ENCODE measurements at regions of chr16 and their contacts with region 1.

Region 1: DNA sequence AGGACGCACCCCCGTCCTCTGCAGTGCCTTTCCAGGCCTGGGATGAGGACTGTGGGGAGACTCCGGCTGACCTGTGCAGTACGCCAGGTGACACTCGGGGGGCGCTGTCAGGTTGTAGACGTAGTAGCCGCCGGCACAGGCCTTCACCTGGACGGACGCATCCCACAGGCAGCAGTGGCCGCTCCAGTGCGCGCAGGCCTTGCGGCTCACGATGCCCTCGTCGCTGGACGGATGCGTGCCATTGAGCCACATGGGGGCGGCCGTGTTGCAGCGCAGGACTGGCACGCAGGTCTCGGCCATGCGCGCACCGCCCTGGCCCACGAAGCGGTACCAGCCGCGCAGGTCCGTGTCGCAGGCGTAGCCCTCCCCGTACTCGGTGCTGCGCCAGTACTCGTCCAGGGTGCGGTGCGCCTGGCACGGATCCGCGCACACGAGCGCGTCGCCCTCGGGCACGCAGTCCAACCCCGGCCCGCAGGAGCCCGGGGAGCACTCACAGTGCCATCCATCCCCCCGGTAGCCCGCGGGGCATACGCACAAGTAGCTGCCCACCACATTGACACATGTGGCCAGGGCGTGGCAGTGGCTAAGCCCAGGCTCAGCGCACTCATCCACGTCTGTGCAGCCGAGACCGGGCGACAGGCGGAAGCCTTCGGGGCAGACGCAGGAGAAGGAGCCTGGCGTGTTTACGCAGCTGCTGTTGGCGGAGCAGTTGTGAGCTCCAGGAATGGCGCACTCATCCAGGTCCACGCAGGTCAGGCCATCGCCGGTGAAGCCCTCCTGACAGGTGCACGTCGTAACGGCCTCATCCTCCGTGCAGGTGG is 3.9 kb downstream of the UMOD start:
- DNase-seq: no peak
- H3K4me3 ChIP-seq: no peak overlapping the region
- H3K27ac ChIP-seq: no peak overlapping the region
- H3K4me1 ChIP-seq: no peaks in the 10 kb centered on the region
- CTCF ChIP-seq: no peak

Region 2: DNA sequence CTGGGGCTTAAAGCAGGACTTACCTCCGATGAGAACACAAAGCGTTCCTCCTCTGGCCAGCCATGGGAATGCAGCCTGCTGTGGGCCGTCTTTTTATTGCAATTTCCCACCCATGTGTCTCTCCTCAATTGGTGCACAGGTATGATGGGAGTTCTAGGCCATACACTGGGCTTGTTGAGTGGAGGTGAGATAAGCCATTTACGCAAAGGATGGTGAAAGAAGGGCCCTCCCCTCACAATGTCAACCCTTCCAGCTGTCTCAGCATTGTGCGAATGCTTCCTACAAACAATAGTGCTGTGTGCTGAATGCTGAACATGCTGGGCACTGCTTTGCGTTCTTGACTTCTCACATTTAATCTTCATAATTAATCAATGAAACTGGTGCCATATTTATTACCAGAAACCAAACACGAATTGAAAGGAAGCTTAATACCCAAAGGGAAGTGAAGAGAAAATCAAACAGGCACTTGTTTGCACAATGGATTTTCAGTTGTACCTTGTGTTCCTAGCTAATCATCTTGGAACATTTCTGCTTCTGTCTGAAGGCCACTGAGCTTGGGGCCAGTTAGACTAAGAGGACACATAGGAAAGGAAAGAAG is 21.0 kb before region 1 on chr16 and contains the start of gene GP2:
- CTCF ChIA-PET with region 1: no interaction called
- POLR2A ChIA-PET with region 1: no interaction called
- intact Hi-C with region 1: no loop called
- DNase-seq: no peak
- H3K4me3 ChIP-seq: no peak within 1 kb of the TSS
- H3K27ac ChIP-seq: no peak within 1 kb of the TSS
- H3K4me1 ChIP-seq: no peaks in the 10 kb centered on the region
- CTCF ChIP-seq: no peak
- total RNA-seq, gene GP2: not detected in 2 replicates

Region 3: DNA sequence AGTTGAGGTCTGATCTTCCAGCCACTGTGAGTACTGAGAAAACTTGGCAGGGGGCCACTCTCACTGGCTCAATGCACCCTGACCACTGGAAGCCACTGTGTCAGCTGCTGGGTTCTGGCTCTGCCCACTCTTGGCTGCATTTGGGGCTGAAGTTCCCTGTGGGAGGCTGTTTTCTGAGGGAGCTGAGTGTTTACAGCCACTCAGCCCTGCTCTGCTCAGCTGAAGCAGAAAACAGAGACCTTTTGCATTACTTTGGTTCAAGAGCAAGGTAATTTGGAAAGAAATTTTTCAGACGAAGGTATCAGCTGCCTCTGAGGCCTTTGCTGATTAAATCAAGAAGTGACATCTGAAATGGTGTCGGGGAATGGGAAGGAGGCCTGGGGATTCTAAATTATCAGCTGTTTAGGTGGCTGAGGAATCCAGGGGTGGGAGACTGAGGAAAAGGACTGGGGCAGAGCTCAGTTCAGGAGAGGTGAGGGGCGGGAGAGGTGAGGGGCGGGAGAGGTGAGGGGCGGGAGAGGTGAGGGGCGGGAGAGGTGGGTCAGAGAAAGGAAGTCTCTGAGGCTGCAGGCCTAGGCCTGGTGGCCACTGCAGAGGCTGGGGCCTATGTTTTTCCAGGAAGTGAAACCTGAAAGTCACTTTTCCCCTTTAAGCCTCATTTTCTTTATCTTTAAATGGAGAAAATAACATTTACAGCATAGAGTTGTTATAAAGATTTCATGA is 61.0 kb after region 1 on chr16 and contains the start of gene ACSM5:
- CTCF ChIA-PET with region 1: interaction called, 11 read pairs
- POLR2A ChIA-PET with region 1: no interaction called
- intact Hi-C with region 1: no loop called
- DNase-seq: no peak
- H3K4me3 ChIP-seq: no peak within 1 kb of the TSS
- H3K27ac ChIP-seq: no peak within 1 kb of the TSS
- H3K4me1 ChIP-seq: no peaks in the 10 kb centered on the region
- CTCF ChIP-seq: no peak
- total RNA-seq, gene ACSM5: not detected in 2 replicates